Activated CD4-positive, alpha-beta T cell treated with anti-CD3 and anti-CD28 coated beads for 36 hours (primary cell): ENCODE measurements at regions of chr6 and their contacts with region 1.

Region 1: DNA sequence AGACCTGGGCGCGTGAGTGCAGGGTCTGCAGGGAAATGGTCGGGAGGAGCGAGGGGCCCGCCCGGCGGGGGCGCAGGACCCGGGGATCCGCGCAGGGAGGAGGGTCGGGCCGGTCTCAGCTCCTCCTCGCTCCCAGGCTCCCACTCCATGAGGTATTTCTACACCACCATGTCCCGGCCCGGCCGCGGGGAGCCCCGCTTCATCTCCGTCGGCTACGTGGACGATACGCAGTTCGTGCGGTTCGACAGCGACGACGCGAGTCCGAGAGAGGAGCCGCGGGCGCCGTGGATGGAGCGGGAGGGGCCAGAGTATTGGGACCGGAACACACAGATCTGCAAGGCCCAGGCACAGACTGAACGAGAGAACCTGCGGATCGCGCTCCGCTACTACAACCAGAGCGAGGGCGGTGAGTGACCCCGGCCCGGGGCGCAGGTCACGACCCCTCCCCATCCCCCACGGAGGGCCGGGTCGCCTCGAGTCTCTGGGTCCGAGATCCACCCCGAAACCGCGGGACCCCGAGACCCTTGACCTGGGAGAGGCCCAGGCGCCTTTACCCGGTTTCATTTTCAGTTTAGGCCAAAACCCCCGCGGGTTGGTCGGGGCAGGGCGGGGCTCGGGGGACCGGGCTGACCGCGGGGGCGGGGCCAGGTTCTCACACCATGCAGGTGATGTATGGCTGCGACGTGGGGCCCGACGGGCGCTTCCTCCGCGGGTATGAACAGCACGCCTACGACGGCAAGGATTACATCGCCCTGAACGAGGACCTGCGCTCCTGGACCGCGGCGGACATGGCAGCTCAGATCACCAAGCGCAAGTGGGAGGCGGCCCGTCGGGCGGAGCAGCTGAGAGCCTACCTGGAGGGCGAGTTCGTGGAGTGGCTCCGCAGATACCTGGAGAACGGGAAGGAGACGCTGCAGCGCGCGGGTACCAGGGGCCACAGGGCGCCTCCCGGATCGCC is 54.2 kb upstream of the HLA-A start:
- DNase-seq: peak; percentile 90
- ATAC-seq: peak; percentile 77
- H3K4me3 Mint-ChIP-seq: peak overlapping the region; percentile 77
- H3K27ac Mint-ChIP-seq: peak overlapping the region; percentile 80
- H3K4me1 Mint-ChIP-seq: peaks cover 16% of the 10 kb centered on the region
- H3K27me3 Mint-ChIP-seq: no peaks in the 10 kb centered on the region

Region 2: GRCh38 chr6:29905286-29905685 is 17.2 kb after region 1 on chr6:
- CTCF ChIA-PET with region 1: no interaction called
- POLR2A ChIA-PET with region 1: no interaction called
- intact Hi-C with region 1: no loop called
- DNase-seq: no peak
- ATAC-seq: no peak
- H3K4me3 Mint-ChIP-seq: no peak overlapping the region
- H3K27ac Mint-ChIP-seq: no peak overlapping the region
- H3K4me1 Mint-ChIP-seq: peaks cover 7% of the 10 kb centered on the region
- H3K27me3 Mint-ChIP-seq: peaks cover 12% of the 10 kb centered on the region

Region 3: DNA sequence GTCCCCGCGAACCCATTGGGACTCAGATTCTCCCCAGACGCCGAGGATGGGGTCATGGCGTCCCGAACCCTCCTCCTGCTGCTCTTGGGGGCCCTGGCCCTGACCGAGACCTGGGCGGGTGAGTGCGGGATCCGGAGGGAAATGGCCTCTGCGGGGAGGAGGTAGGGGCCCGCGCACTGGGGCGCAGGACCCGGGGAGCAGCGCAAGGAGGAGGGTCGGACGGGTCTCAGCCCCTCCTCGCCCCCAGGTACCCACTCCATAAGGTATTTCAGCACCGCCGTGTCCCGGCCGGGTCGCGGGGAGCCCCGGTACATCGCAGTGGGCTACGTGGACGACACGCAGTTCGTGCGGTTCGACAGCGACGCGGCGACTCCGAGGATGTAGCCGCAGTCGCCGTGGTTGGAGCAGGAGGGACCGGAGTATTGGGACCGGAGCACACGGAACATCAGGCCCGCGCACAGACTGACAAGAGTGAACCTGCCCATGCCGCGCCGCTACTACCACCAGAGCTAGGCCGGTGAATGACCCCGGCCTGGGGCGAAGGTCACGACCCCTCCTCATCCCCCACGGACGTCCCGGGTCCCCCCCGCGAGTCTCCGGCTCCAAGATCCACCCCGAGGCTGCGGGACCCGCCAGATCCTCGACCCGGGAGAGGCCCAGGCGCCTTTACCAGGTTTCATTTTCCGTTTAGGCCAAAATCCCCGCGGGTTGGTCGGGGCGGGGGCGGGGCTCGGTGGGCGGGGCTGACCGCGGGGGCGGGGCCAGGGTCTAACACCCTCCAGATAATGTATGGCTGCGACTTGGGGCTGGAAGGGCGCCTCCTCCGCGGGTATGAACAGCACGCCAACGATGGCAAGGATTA is 38.5 kb after region 1 on chr6:
- CTCF ChIA-PET with region 1: no interaction called
- POLR2A ChIA-PET with region 1: no interaction called
- intact Hi-C with region 1: loop called in 1 of 2 experiments (anchors 1 kb)
- DNase-seq: peak; percentile 92
- ATAC-seq: peak; percentile 91
- H3K4me3 Mint-ChIP-seq: peak overlapping the region; percentile 82
- H3K27ac Mint-ChIP-seq: peak overlapping the region; percentile 94
- H3K4me1 Mint-ChIP-seq: peaks cover 32% of the 10 kb centered on the region
- H3K27me3 Mint-ChIP-seq: no peaks in the 10 kb centered on the region